Activated CD4-positive, alpha-beta memory T cell treated with anti-CD3 and anti-CD28 coated beads for 36 hours (primary cell): ENCODE measurements at regions of chr17 and their contacts with region 1.

Region 1: DNA sequence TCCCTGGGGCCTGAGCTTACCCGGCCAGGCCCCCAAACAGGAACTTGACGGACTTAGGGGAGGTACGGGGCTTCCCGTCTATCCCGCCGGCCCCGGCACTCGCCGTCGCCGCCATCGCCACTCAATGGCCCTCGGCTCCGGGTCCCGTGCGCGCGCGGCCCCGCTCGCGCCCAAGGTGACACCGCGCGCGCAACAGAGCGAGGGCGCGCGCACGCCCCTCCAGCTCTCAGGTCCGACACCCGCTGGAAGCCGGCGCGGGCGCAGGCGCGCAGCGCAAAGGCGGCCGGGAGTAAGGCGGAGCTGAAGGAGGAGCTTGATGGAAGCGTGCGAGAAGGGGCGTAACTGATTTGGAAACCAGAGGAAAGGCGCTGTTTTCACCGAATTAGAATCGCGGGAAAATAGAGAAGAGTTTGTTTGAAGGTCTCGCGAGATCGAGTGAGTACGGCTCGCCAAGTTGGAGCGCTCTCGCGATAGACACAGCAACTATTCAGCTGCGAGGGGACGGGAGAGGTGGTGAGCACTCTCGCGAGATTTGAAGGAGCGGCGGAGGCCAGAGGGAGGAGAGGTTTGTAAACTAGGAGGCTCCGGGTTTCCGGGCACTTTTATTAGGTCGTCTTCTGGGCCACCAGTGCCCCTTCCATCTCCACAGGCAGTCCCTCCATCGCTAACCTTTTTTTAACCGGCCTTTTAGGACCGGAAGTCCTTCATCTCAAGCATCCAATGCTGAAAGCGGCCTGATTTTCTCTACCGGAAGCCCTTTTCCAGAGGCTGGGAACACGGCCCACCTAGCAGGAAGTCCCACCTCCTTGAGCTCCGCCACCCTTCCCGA is at the starts of genes RNF167 and SLC25A11:
- DNase-seq: peak; percentile 97
- H3K4me3 Mint-ChIP-seq: peak within 1 kb of the TSS; percentile 90
- H3K27ac Mint-ChIP-seq: peak within 1 kb of the TSS; percentile 95
- H3K4me1 Mint-ChIP-seq: peaks cover 48% of the 10 kb centered on the region
- H3K27me3 Mint-ChIP-seq: peaks cover 1% of the 10 kb centered on the region
- total RNA-seq, gene RNF167: 130 to 157 TPM
- total RNA-seq, gene SLC25A11: 70.5 to 72.5 TPM

Region 2: DNA sequence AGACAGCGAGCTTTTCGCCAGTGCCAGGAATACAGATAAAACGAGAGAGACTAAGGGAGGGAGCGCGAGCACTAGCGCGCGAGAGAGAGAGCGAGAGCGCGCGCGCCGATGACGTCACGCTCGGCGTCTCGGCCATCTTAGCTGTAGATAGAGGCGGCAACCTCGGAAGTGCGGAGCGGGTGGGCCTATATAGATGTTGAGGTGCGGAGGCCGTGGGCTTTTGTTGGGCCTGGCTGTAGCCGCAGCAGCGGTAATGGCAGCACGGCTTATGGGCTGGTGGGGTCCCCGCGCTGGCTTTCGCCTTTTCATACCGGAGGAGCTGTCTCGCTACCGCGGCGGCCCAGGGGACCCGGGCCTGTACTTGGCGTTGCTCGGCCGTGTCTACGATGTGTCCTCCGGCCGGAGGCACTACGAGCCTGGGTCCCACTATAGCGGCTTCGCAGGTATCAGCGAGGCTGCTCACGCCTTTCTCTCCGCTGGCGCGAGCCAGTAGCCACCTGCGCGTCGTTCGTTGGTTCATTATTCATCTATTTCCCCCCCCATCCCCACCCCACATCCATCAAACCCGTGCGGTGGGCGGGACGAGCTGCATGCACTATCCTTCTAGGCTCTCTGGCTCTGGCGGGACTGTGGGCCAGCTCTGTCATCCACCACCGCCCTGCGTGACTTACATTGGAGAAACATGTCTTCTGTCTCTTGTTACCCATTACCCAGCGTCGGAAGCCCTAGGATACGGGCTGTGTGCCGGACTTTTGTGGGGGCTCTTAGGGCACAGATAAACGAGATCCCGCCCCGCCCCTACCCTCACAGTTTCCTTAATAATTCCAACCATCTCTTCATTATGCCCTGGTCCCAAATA is 796.2 kb before region 1 on chr17:
- CTCF ChIA-PET with region 1: no interaction called
- POLR2A ChIA-PET with region 1: no interaction called
- intact Hi-C with region 1: loop called (anchors 10 kb)
- DNase-seq: peak; percentile 93
- H3K4me3 Mint-ChIP-seq: peak overlapping the region; percentile 96
- H3K27ac Mint-ChIP-seq: peak overlapping the region; percentile 99
- H3K4me1 Mint-ChIP-seq: peaks cover 40% of the 10 kb centered on the region
- H3K27me3 Mint-ChIP-seq: no peaks in the 10 kb centered on the region

Region 3: DNA sequence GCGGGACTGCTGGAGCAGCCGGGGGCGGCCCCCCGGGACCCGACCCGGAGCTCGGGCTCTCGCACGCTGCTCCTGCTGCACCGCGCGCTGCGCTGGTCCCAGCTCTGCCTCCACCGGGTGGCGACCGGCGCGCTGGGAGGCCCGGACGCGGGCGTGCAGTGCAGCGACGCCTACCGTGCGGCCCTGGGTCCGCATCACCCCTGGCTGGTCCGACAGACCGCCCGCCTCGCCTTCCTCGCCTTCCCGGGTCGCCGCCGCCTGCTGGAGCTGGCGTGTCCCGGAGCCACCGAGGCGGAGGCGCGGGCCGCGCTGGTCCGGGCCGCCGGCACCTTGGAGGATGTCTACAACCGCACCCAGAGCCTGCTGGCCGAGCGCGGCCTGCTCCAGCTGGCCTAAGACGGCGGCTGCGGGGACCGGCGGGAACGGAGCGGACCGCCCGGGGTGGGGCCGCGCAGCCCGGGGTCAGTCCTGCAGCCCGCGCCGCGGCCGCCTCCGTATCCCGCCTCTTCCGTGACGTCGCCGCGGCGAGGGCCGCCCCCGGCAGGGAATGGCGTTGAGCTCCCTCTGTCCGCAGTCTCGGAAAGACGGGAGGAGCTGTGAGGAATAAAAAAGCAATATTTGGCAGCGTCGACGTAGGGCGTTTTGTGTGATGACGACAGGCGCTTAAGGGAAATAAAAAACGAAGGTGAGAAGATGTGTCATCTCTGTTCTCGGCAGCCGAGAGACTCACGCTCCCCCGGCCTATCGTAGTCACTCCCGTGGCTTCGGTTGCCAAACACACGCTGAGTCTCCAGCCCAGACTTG is 149.9 kb before region 1 on chr17:
- CTCF ChIA-PET with region 1: interaction called, 3 read pairs
- POLR2A ChIA-PET with region 1: interaction called, 7 read pairs
- intact Hi-C with region 1: loop called (anchors 2 kb)
- DNase-seq: peak; percentile 89
- H3K4me3 Mint-ChIP-seq: peak overlapping the region; percentile 77
- H3K27ac Mint-ChIP-seq: peak overlapping the region; percentile 82
- H3K4me1 Mint-ChIP-seq: peaks cover 31% of the 10 kb centered on the region
- H3K27me3 Mint-ChIP-seq: peaks cover 25% of the 10 kb centered on the region

Region 4: DNA sequence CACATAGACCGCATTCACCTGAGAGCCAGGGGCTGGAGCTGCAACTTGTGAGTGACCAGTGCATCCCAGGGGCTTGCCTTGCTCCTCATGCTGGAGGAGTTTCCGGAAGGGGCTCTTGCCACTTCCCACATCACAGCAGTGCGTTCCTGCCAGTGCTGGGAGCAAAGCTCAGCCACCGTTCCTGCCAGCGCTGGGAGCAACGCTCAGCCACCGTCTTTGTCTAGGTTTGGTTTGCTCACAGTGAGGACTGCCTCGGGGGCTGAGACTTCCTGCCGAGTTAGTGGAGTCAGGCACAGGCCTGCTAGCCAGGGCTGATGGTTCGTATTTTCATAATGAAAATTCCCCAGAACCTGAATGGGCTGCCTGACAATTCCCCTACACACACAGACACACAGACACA is 31.7 kb before region 1 on chr17:
- CTCF ChIA-PET with region 1: interaction called, 12 read pairs
- POLR2A ChIA-PET with region 1: interaction called, 3 read pairs
- intact Hi-C with region 1: loop called (anchors 1 kb)
- DNase-seq: peak; percentile 34
- H3K4me3 Mint-ChIP-seq: no peak overlapping the region
- H3K27ac Mint-ChIP-seq: no peak overlapping the region
- H3K4me1 Mint-ChIP-seq: peaks cover 4% of the 10 kb centered on the region
- H3K27me3 Mint-ChIP-seq: no peaks in the 10 kb centered on the region

Region 5: DNA sequence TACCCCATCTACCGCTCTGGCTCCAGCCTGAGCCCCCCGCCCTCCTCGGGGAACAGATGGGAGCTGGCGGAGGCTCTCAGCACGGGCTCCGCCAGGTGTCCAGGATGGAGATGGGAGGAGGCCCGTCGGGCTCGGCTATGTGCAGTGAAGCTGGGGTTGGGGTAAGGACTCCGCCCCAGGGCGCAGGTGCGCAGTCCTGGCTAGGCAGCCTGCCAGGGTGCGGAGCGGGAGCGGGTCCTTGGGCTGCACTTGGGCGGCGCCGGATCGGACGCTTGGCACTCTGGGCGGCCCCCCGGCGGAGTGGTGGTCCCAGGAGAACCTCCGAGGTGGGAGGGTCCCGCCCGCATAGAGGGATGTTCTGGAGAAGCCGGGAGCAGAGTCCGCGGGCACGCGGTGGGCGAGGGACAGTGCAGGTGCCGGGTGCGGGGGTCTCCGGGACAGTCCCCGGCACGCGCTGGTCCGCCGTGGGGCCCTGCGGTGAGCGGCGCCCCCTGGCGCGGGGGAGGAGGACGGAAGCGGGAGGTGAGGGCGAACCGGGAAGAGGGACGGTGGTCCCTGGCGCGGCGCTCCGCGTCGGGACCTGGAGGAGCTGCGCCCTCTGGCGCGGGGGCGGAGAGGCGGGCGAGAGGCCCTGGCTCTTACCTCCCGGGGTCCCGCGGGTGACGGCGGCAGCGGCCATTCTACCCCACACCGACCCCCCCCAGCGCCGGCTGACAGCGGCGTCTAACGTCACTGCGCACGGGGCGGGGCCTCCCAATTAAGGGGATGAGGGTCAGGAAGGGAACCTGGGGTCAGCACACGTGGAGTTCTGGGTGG is 47.1 kb after region 1 on chr17 and contains the start of gene CAMTA2:
- CTCF ChIA-PET with region 1: interaction called, 3 read pairs
- POLR2A ChIA-PET with region 1: interaction called, 11 read pairs
- intact Hi-C with region 1: loop called (anchors 5 kb)
- DNase-seq: peak; percentile 90
- H3K4me3 Mint-ChIP-seq: peak within 1 kb of the TSS; percentile 91
- H3K27ac Mint-ChIP-seq: peak within 1 kb of the TSS; percentile 94
- H3K4me1 Mint-ChIP-seq: peaks cover 42% of the 10 kb centered on the region
- H3K27me3 Mint-ChIP-seq: no peaks in the 10 kb centered on the region
- total RNA-seq, gene CAMTA2: 101 to 109 TPM

Region 6: GRCh38 chr17:5031365-5032082 is 91.5 kb after region 1 on chr17:
- CTCF ChIA-PET with region 1: interaction called, 13 read pairs
- POLR2A ChIA-PET with region 1: no interaction called
- intact Hi-C with region 1: no loop called
- DNase-seq: peak; percentile 90
- H3K4me3 Mint-ChIP-seq: peak overlapping the region; percentile 68
- H3K27ac Mint-ChIP-seq: peak overlapping the region; percentile 87
- H3K4me1 Mint-ChIP-seq: peaks cover 16% of the 10 kb centered on the region
- H3K27me3 Mint-ChIP-seq: no peaks in the 10 kb centered on the region

Region 7: GRCh38 chr17:5272322-5272721 is 332.3 kb after region 1 on chr17:
- CTCF ChIA-PET with region 1: no interaction called
- POLR2A ChIA-PET with region 1: no interaction called
- intact Hi-C with region 1: no loop called
- DNase-seq: peak; percentile 76
- H3K4me3 Mint-ChIP-seq: peak overlapping the region; percentile 25
- H3K27ac Mint-ChIP-seq: peak overlapping the region; percentile 46
- H3K4me1 Mint-ChIP-seq: peaks cover 14% of the 10 kb centered on the region
- H3K27me3 Mint-ChIP-seq: peaks cover 3% of the 10 kb centered on the region